ENCODE measurements at regions of chr4 and their contacts with region 1.

Region 1: DNA sequence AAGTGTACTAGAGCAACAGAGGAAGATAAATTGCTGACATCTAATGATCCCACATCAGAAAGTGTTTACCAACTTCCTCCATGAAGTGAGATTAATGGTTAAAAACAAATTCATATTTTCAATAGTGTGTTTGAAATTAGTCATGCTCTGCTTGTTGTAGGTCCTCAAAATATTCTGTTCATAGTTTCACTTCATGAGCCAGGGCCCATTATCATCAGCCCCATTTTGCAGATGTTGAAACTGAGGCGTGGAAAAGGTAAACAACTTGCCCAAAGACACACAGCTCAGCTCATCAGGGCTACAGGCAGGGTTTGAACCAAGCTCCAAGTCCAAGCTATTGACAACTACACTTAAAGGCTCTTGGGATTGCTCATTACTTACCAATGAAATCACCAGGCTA is 103.5 kb upstream of the PPARGC1A start:
- DNase-seq: peak; percentile 5
- H3K4me3 ChIP-seq: no peak overlapping the region
- H3K27ac ChIP-seq: peak overlapping the region; percentile 16
- H3K4me1 ChIP-seq: peaks cover 21% of the 10 kb centered on the region
- CTCF ChIP-seq: no peak

Region 2: GRCh38 chr4:23970201-23970850 is 23.0 kb before region 1 on chr4:
- CTCF ChIA-PET with region 1: interaction called, 3 read pairs
- POLR2A ChIA-PET with region 1: interaction called, 16 read pairs
- intact Hi-C with region 1: loop called (anchors 2 kb)
- DNase-seq: peak; percentile 18
- H3K4me3 ChIP-seq: no peak overlapping the region
- H3K27ac ChIP-seq: no peak overlapping the region
- H3K4me1 ChIP-seq: peaks cover 35% of the 10 kb centered on the region
- CTCF ChIP-seq: no peak

Region 3: DNA sequence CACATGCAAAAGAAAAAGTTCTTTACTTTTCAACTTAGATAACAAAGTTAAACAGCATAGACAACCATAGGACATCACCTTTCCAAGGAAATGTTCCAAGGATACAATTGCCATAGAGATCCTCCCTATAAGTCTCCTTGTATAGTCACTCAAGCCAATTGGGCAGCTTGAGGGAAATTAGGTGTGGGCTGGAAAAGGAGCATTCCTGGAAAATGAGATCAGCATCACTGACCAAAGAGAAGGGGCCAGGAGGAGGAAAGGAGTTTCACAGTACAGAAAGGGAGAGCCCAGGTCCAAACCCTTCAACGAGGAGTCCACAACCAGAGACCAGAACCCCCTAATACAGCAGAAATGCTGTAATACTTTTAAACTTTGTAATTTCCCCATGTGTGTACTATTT is 12.0 kb before region 1 on chr4:
- CTCF ChIA-PET with region 1: interaction called, 3 read pairs
- POLR2A ChIA-PET with region 1: interaction called, 15 read pairs
- intact Hi-C with region 1: no loop called
- DNase-seq: no peak
- H3K4me3 ChIP-seq: no peak overlapping the region
- H3K27ac ChIP-seq: no peak overlapping the region
- H3K4me1 ChIP-seq: no peaks in the 10 kb centered on the region
- CTCF ChIP-seq: no peak

Measured in OCI-LY7 (cell line).